ENCODE measurements at regions of chr2 and their contacts with region 1.

Region 1: DNA sequence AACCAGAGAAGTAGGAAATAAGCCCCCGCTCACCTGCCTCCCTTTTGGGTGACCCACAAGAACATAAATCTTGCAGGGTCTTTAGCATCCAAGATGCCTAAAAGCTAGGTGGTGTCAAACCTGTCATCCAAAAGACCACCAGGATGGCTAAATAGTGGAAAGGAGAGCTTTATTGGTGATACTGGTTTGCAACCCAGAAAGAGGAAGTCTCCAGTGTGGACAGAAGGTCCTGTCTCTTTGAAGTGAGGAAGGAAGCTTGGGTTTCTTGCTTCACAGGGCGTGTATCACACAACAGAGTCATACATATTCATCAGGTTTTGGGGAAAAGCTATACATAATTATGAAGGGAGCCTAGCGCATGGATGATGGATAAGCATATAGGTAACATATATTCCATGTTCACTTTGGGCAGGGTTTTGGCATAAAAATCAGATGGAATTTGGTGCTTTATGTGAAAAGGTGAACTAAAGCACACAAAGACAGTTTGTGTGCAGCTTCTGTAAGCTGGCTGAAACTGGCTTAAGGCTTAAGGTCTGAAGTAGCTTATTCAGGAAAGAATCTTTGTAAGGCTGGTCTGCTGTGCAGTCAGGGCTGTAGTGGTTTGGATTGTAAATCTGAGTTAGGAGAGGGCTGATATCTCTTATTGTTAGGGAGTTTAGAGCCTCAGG is 102.2 kb upstream of the MSH2 start:
- DNase-seq: no peak
- ATAC-seq: no peak
- H3K4me3 ChIP-seq: no peak overlapping the region
- H3K27ac ChIP-seq: peak overlapping the region; percentile 74 to 79 (median 79)
- H3K4me1 ChIP-seq: peaks cover 24 to 36% of the 10 kb centered on the region in 2 donors
- H3K27me3 ChIP-seq: no peaks in the 10 kb centered on the region
- CTCF ChIP-seq: no peak
- POLR2A ChIP-seq: no peak

Region 2: GRCh38 chr2:47225061-47225859 is 75.5 kb before region 1 on chr2:
- in situ Hi-C with region 1: no loop called
- intact Hi-C with region 1: loop called (anchors 5 kb)
- DNase-seq: peak; percentile 78 to 91
- ATAC-seq: peak; percentile 95 to 97
- H3K4me3 ChIP-seq: no peak overlapping the region
- H3K27ac ChIP-seq: peak overlapping the region; percentile 33 to 61 (median 58)
- H3K4me1 ChIP-seq: peaks cover 29 to 31% of the 10 kb centered on the region in 2 donors
- H3K27me3 ChIP-seq: no peaks in the 10 kb centered on the region
- CTCF ChIP-seq: no peak
- POLR2A ChIP-seq: no peak